PC-9 (cell line): ENCODE measurements at regions of chr10 and their contacts with region 1.

Region 1: DNA sequence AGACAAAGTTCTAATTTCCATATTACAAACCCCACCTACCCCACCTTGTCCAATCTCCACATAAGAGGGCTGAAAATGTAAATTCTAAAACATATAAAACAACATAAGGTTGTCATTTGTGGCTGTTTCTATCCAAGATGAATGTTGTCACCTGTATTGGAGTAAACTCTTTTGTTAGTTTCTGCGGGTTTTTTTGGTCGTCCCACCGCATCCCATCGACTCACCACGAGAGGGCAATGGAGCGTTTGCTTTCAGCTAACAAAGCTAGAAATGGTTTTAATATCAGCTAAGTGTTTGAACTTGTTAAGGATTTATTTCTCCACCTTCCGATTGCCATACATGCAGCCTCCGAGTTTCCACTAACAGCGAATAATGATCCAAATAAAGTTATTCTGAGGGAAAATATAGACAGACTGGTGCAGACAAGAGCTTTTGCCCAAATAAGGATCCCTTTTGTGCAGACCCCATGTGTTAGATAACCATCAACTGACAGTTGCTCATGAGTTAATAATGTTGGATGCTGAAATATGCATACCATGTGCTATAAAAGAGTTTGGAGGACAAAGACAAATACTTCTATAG is 137.2 kb downstream of the ARID5B start:
- DNase-seq: peak; percentile 76 to 79
- H3K4me3 ChIP-seq: no peak overlapping the region
- H3K27ac ChIP-seq: peak overlapping the region; percentile 57
- H3K4me1 ChIP-seq: peaks cover 35% of the 10 kb centered on the region
- H3K27me3 ChIP-seq: no peaks in the 10 kb centered on the region
- CTCF ChIP-seq: peak; percentile 90

Region 2: GRCh38 chr10:60816628-60817397 is 1221.9 kb before region 1 on chr10:
- CTCF ChIA-PET with region 1: interaction called, 5 read pairs
- POLR2A ChIA-PET with region 1: no interaction called
- intact Hi-C with region 1: loop called (anchors 1 kb)
- DNase-seq: peak; percentile 33 to 59
- H3K4me3 ChIP-seq: no peak overlapping the region
- H3K27ac ChIP-seq: no peak overlapping the region
- H3K4me1 ChIP-seq: peaks cover 5% of the 10 kb centered on the region; the same call in 1 of the 2 replicates
- H3K27me3 ChIP-seq: no peaks in the 10 kb centered on the region
- CTCF ChIP-seq: peak; percentile 95

Region 3: GRCh38 chr10:61750929-61751471 is 287.7 kb before region 1 on chr10:
- CTCF ChIA-PET with region 1: no interaction called
- POLR2A ChIA-PET with region 1: no interaction called
- intact Hi-C with region 1: loop called (anchors 5 kb)
- DNase-seq: peak in 1 of 2 experiments; percentile 57
- H3K4me3 ChIP-seq: no peak overlapping the region
- H3K27ac ChIP-seq: no peak overlapping the region
- H3K4me1 ChIP-seq: peaks cover 17% of the 10 kb centered on the region
- H3K27me3 ChIP-seq: no peaks in the 10 kb centered on the region
- CTCF ChIP-seq: peak; percentile 55

Region 4: GRCh38 chr10:61903221-61903927 is 135.3 kb before region 1 on chr10:
- CTCF ChIA-PET with region 1: interaction called, 6 read pairs
- POLR2A ChIA-PET with region 1: interaction called, 3 read pairs
- intact Hi-C with region 1: loop called (anchors 1 kb)
- DNase-seq: peak; percentile 42 to 51
- H3K4me3 ChIP-seq: peak overlapping the region; percentile 76
- H3K27ac ChIP-seq: peak overlapping the region; percentile 43
- H3K4me1 ChIP-seq: peaks cover 31% of the 10 kb centered on the region
- H3K27me3 ChIP-seq: no peaks in the 10 kb centered on the region
- CTCF ChIP-seq: no peak

Region 5: GRCh38 chr10:62095181-62096071 is 56.7 kb after region 1 on chr10:
- CTCF ChIA-PET with region 1: interaction called, 4 read pairs
- POLR2A ChIA-PET with region 1: interaction called, 4 read pairs
- intact Hi-C with region 1: loop called (anchors 5 kb)
- DNase-seq: peak in 1 of 2 experiments; percentile 56
- H3K4me3 ChIP-seq: 0 out of 2 replicates have a peak overlapping the region, but pooled peaks have one; percentile 1
- H3K27ac ChIP-seq: peak overlapping the region; percentile 62
- H3K4me1 ChIP-seq: peaks cover 53% of the 10 kb centered on the region
- H3K27me3 ChIP-seq: no peaks in the 10 kb centered on the region
- CTCF ChIP-seq: no peak

Region 6: GRCh38 chr10:62384057-62384446 is 345.4 kb after region 1 on chr10:
- CTCF ChIA-PET with region 1: no interaction called
- POLR2A ChIA-PET with region 1: interaction called, 4 read pairs
- intact Hi-C with region 1: loop called (anchors 5 kb)
- DNase-seq: peak; percentile 66 to 99
- H3K4me3 ChIP-seq: peak overlapping the region; percentile 9; the same call in 1 of the 2 replicates
- H3K27ac ChIP-seq: peak overlapping the region; percentile 88
- H3K4me1 ChIP-seq: peaks cover 48% of the 10 kb centered on the region
- H3K27me3 ChIP-seq: no peaks in the 10 kb centered on the region
- CTCF ChIP-seq: no peak

Region 7: DNA sequence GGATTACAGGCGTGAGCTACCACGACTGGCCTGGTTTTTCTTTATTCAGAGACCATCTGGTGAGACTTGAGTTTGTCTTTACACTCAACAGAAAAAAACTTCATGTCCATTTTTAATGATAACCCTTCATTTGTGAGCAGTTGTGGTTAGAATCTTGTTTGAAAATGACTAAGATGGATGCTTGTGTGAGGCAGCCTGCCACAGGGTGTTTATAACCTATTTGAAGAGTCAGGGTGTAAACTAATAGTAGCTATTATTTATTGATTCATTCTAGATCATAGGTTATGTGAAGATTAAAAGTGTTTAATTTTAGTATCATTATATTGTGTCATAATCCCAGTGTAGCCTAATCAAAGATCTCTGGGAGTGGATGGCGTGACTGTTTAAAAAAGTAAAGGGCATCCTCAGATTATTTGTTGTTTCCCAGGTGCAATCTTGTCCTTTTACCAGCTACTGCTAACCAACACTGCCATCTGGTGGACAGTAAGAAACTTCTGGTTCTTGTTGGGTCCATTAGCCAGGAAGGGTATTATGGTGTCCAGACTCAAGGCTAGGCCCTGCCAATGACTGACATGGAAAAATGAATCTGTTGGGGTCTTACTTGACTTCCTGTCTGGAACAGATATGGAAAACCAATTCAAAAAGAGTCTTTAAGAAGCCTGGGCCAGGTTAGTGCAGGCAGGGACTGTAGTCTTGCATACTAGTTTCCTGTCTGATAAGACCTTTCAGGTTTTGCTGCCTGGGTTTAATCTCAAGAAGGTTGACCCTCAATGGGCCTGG is 1119.3 kb after region 1 on chr10:
- CTCF ChIA-PET with region 1: no interaction called
- POLR2A ChIA-PET with region 1: no interaction called
- intact Hi-C with region 1: loop called (anchors 5 kb)
- DNase-seq: peak; percentile 39 to 76
- H3K4me3 ChIP-seq: no peak overlapping the region
- H3K27ac ChIP-seq: 0 out of 2 replicates have a peak overlapping the region, but pooled peaks have one; percentile 3
- H3K4me1 ChIP-seq: no peaks in the 10 kb centered on the region
- H3K27me3 ChIP-seq: no peaks in the 10 kb centered on the region
- CTCF ChIP-seq: peak; percentile 95